Caco-2 (cell line): ENCODE measurements at regions of chr13 and their contacts with region 1.

Region 1: GRCh38 chr13:20902438-20903163 is at the start of gene XPO4:
- DNase-seq: peak; percentile 87 to 93
- H3K4me3 ChIP-seq: peak within 1 kb of the TSS; percentile 93
- H3K4me3 Mint-ChIP-seq: peak within 1 kb of the TSS; percentile 99
- H3K27ac Mint-ChIP-seq: peak within 1 kb of the TSS; percentile 99
- H3K4me1 ChIP-seq: peaks cover 5% of the 10 kb centered on the region; the same call in 1 of the 2 replicates
- H3K4me1 Mint-ChIP-seq: peaks cover 7% of the 10 kb centered on the region
- H3K27me3 ChIP-seq: no peaks in the 10 kb centered on the region
- H3K27me3 Mint-ChIP-seq: no peaks in the 10 kb centered on the region
- CTCF ChIP-seq: no peak
- total RNA-seq, gene XPO4: 31.3 and 33.3 TPM in 2 replicates

Region 2: DNA sequence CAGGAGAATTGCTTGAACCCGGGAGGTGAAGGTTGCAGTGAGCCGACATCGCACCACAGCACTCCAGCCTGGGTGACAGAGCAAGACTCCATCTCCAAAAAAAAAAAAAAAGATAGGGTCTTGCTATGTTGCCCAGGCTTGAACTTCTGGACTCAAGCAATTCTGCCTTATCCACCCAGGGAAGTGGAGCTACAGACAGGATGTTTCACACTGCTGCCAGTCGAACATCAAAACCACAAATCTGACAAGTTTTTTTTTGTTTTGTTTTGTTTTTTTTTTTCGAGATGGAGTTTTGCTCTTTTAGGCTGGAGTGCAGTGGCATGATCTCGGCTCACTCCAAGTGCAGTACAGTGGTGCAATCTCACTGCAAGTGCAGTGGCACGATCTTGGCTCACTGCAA is 10.8 kb before region 1 on chr13:
- CTCF ChIA-PET with region 1: no interaction called
- POLR2A ChIA-PET with region 1: no interaction called
- intact Hi-C with region 1: loop called (anchors 2 kb)
- DNase-seq: no peak
- H3K4me3 ChIP-seq: no peak overlapping the region
- H3K4me3 Mint-ChIP-seq: no peak overlapping the region
- H3K27ac Mint-ChIP-seq: no peak overlapping the region
- H3K4me1 ChIP-seq: no peaks in the 10 kb centered on the region
- H3K4me1 Mint-ChIP-seq: no peaks in the 10 kb centered on the region
- H3K27me3 ChIP-seq: no peaks in the 10 kb centered on the region
- H3K27me3 Mint-ChIP-seq: no peaks in the 10 kb centered on the region
- CTCF ChIP-seq: no peak

Region 3: DNA sequence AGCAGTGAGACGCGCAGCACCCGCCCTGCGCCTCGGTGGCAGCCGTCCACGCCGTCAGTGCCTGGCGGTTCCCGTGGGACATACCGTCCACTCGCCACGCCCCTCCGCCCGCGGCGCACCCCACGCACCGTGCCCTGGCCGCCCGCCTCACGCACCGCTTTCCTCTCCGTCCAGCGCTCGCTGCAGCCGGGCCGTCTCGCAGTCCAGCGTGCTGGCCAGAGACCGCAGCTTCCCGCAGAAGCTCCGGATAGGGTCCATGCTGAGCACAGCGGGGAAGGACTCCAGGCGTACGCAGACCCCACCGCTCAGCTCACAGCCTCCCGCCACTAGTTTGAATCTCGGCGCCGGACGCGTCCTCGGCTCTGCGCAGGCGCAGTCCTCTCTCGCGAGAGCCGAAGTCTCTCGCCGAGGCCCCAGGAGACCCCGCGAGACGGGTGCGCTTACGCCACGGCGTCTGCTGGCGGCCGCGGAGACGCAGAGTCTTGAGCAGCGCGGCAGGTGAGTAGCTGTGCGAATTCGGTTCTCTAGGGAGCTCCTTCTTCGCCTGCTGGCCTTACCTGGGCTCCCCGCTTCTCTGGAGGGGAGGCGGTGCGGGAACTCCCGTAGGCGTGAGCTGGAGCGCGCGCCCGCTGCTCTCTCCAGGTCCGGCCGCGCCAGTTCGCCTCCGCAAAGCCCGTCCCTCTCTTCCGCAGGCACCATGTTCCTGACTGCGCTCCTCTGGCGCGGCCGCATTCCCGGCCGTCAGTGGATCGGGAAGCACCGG is 273.8 kb after region 1 on chr13 and contains the starts of genes MRPL57 and SKA3:
- CTCF ChIA-PET with region 1: no interaction called
- POLR2A ChIA-PET with region 1: interaction called, 12 read pairs
- intact Hi-C with region 1: no loop called
- DNase-seq: peak; percentile 95 to 98
- H3K4me3 ChIP-seq: peak within 1 kb of the TSS; percentile 82
- H3K4me3 Mint-ChIP-seq: peak within 1 kb of the TSS; percentile 87
- H3K27ac Mint-ChIP-seq: peak within 1 kb of the TSS; percentile 96
- H3K4me1 ChIP-seq: peaks cover 12% of the 10 kb centered on the region; the same call in 1 of the 2 replicates
- H3K4me1 Mint-ChIP-seq: peaks cover 7% of the 10 kb centered on the region
- H3K27me3 ChIP-seq: no peaks in the 10 kb centered on the region
- H3K27me3 Mint-ChIP-seq: no peaks in the 10 kb centered on the region
- CTCF ChIP-seq: no peak
- total RNA-seq, gene MRPL57: 32.8 and 33.9 TPM in 2 replicates
- total RNA-seq, gene SKA3: 33.3 and 37.5 TPM in 2 replicates